Sciatic nerve (tissue), 2 donors: ENCODE measurements at regions of chr6 and their contacts with region 1.

Region 1: DNA sequence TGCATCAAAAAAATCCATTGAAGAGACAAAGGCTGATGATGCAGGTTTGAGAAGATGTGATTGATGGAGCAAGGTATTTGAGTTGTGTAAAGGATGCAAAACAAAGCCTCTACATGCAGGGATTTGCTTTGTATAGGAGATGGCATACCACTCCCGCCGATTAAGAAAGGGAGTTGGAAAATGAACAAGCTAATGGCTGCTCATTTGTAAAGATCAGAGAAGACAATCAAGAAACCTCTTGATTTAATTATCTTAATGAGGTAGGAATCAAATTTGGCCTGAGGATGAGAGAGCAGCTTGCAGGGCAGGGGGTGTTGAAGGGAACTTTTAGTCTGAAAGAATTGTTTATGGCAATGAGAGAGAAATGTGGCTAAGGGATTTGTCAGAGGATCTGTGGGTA is 448.2 kb upstream of the ADGRB3 start:
- DNase-seq: no peak
- ATAC-seq: no peak

Region 2: GRCh38 chr6:67045076-67045475 is 1141.8 kb before region 1 on chr6:
- intact Hi-C with region 1: loop called (anchors 10 kb)
- DNase-seq: no peak
- ATAC-seq: no peak

Region 3: GRCh38 chr6:67986694-67987232 is 200.1 kb before region 1 on chr6:
- intact Hi-C with region 1: no loop called
- DNase-seq: no peak
- ATAC-seq: no peak

Region 4: DNA sequence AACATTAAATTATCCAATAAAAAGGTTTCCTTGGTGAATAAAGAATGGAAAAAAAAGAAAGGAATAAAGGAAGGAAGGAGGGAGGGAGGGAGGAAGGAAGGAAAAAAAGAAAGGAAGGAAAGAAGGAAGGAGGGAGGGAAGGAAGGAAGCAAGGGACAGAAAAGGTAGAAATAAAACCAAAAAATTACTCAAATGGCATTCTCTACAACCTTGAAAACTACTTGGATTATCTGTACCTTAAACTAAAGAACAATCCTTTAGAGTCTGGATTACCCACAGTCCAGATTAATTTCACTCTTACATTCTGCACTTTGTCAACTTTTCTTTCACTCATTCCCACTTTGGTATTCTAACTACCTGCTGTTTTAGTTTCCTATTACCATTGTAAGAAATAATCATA is 86.4 kb after region 1 on chr6:
- intact Hi-C with region 1: no loop called
- DNase-seq: no peak
- ATAC-seq: no peak